Ovary (tissue), 10 donors: ENCODE measurements at regions of chr6 and their contacts with region 1.

Region 1: DNA sequence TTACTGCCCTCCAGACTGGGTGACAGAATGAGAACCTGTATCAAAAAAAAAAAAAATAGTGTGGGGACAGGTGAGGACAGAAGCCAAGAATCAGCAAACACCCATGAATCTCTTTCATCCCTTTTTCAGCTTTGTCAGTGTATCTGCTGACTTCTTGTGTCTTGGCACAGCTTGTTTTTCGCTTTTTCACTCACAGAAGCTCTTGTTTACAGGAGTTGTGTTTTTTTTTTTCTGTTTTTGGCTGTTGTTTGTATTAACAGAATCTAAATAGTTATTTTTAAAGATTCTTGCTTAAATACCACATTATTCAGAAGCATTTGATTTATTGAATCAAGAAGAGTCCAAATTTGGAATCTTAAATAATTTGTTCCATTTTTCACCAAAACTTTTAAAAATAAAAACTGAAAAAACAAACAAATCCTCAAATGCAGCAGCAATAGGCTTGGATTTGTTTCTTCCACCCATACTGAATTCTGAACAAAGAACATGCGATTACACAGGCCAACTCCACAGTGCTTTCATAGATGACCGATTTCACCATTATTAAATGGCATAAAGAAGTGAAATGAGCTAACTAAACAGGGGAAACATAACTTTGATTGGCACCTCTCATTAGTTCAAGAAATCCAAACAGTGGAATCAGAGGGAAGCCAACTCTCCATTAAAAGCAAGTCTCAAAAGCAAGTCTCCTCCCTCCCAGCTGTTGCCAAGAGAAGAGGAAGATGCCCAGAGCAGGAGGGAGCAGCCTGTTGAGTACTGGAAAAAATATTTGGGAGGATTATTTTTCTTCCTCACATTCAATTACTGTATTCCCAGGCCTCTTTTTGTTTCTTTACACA is 27.2 kb upstream of the GPR63 start:
- DNase-seq: no peak
- H3K4me3 ChIP-seq: no peak overlapping the region
- H3K27ac ChIP-seq: no peak overlapping the region
- H3K4me1 ChIP-seq: no peaks in the 10 kb centered on the region
- H3K27me3 ChIP-seq: no peaks in the 10 kb centered on the region
- CTCF ChIP-seq: no peak
- EP300 ChIP-seq: no peak
- POLR2A ChIP-seq: no peak

Region 2: GRCh38 chr6:96837081-96837971 is 27.1 kb before region 1 on chr6 and contains the start of gene GPR63:
- intact Hi-C with region 1: no loop called
- DNase-seq: peak; percentile 55 to 78 (median 62)
- H3K4me3 ChIP-seq: peak within 1 kb of the TSS; percentile 47
- H3K27ac ChIP-seq: peak within 1 kb of the TSS in 1 of 2 donors; percentile 35
- H3K4me1 ChIP-seq: no peaks in the 10 kb centered on the region
- H3K27me3 ChIP-seq: no peaks in the 10 kb centered on the region
- CTCF ChIP-seq: no peak
- EP300 ChIP-seq: no peak
- POLR2A ChIP-seq: peak; percentile 23
- total RNA-seq, gene GPR63: 1.3 to 1.8 (median 1.7) TPM

Region 3: GRCh38 chr6:97885828-97886227 is 1021.4 kb after region 1 on chr6:
- intact Hi-C with region 1: loop called in 1 of 4 experiments (anchors 10 kb)
- DNase-seq: no peak
- H3K4me3 ChIP-seq: no peak overlapping the region
- H3K27ac ChIP-seq: no peak overlapping the region
- H3K4me1 ChIP-seq: no peaks in the 10 kb centered on the region
- H3K27me3 ChIP-seq: no peaks in the 10 kb centered on the region
- CTCF ChIP-seq: no peak
- EP300 ChIP-seq: no peak
- POLR2A ChIP-seq: no peak